ENCODE measurements at regions of chr7 and their contacts with region 1.

Region 1: DNA sequence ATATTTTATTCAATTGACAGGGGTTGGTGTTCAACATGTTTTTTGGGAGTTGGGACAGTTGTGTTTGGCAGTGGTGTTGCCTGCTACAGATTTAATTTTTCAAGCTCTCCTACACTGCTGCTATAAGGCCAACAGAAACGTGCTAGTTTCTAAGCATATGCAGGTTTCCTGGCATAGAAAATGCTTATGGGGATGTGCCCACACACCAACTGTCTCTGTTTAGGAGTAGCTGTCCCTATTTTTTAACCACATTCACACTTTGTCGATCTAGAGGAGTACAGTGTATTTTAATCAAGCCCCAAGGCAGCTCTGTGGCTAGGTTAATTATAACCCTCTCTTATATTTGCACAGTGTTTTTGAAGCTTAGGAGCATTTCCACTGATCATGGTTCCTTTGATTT is 28.6 kb downstream of the TMEM178B start:
- DNase-seq: no peak
- H3K4me3 ChIP-seq: no peak overlapping the region
- H3K4me1 ChIP-seq: peaks cover 13% of the 10 kb centered on the region
- H3K27me3 ChIP-seq: no peaks in the 10 kb centered on the region

Region 2: GRCh38 chr7:140304191-140304799 is 798.1 kb before region 1 on chr7:
- in situ Hi-C with region 1: no loop called
- DNase-seq: no peak
- H3K4me3 ChIP-seq: no peak overlapping the region
- H3K4me1 ChIP-seq: no peaks in the 10 kb centered on the region
- H3K27me3 ChIP-seq: no peaks in the 10 kb centered on the region

Region 3: DNA sequence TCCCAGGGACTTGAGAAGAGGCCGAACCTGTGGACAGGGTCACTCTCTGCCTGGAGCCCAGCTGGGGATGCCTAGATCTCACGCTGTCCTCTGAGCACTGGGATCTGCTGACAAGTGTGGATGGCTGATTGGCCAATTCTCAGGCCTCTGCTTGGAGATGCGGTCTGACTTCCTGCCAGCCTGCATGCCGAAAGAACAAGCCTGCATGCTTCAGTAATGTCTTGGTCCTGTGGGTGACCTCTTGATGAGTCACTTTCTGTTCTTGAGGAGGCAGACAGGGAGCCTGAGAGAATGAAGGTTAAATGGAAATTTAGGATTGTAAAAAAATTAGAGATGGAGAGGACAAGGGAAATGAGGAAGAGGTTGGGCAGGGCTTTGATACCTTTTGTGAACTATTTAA is 56.2 kb after region 1 on chr7:
- in situ Hi-C with region 1: loop called (anchors 5 kb)
- DNase-seq: no peak
- H3K4me3 ChIP-seq: no peak overlapping the region
- H3K4me1 ChIP-seq: peaks cover 4% of the 10 kb centered on the region; the same call in 1 of the 2 replicates
- H3K27me3 ChIP-seq: no peaks in the 10 kb centered on the region

Region 4: DNA sequence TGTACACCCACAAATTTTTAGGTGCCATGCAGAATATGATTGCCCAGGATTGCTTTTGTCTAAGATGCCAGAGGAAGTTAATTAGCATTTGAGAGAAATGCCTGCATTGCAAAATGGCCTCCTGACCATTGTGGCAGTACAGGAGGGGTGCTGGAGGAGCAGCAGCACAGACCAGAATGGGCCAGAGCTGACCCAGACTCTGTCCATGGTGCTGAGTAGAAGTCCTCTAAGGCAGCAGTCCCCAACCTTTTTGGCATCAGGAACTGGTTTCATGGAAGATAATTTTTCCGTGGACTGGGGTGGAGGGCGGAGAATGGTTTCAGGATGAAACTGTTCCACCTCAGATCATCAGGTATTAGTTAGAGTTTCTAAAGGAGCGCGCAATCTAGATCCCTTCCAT is 231.0 kb after region 1 on chr7:
- in situ Hi-C with region 1: no loop called
- DNase-seq: peak; percentile 6 to 49
- H3K4me3 ChIP-seq: no peak overlapping the region
- H3K4me1 ChIP-seq: no peaks in the 10 kb centered on the region
- H3K27me3 ChIP-seq: no peaks in the 10 kb centered on the region

Measured in HAP-1 (cell line).